Activated B cell treated with CpG ODN at 0.5 μM for 24 hours (primary cell): ENCODE measurements at regions of chr20 and their contacts with region 1.

Region 1: GRCh38 chr20:12989586-12990115 is 19.1 kb upstream of the SPTLC3 start:
- DNase-seq: no peak
- ATAC-seq: no peak
- H3K4me3 Mint-ChIP-seq: no peak overlapping the region
- H3K27ac Mint-ChIP-seq: no peak overlapping the region
- H3K4me1 Mint-ChIP-seq: no peaks in the 10 kb centered on the region
- H3K27me3 Mint-ChIP-seq: peaks cover 4% of the 10 kb centered on the region
- CTCF ChIP-seq: no peak

Region 2: DNA sequence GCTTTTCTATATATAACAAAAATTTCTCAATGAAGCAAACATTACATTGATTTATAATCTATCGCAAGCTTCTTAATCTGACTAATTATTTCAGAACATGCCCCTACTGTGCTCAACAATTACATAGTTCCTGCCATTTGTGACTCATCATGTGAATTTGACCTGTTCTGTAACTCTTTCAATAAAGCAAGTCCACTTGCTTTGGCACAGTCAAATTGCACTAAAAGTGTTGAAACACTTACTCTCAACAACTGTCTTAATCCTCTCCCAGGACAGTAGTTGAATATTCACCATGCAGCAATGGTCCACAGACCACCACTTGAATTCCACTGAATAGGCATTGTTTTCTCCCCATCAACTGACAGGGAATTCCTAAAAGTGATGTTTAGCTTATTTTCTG is 48.6 kb before region 1 on chr20:
- CTCF ChIA-PET with region 1: no interaction called
- POLR2A ChIA-PET with region 1: no interaction called
- intact Hi-C with region 1: no loop called
- DNase-seq: no peak
- ATAC-seq: no peak
- H3K4me3 Mint-ChIP-seq: no peak overlapping the region
- H3K27ac Mint-ChIP-seq: no peak overlapping the region
- H3K4me1 Mint-ChIP-seq: no peaks in the 10 kb centered on the region
- H3K27me3 Mint-ChIP-seq: no peaks in the 10 kb centered on the region
- CTCF ChIP-seq: no peak

Region 3: GRCh38 chr20:13041574-13042457 is 52.2 kb after region 1 on chr20:
- CTCF ChIA-PET with region 1: no interaction called
- POLR2A ChIA-PET with region 1: no interaction called
- intact Hi-C with region 1: loop called (anchors 5 kb)
- DNase-seq: no peak
- ATAC-seq: no peak
- H3K4me3 Mint-ChIP-seq: no peak overlapping the region
- H3K27ac Mint-ChIP-seq: no peak overlapping the region
- H3K4me1 Mint-ChIP-seq: no peaks in the 10 kb centered on the region
- H3K27me3 Mint-ChIP-seq: no peaks in the 10 kb centered on the region
- CTCF ChIP-seq: no peak